Activated CD4-positive, alpha-beta memory T cell treated with anti-CD3 and anti-CD28 coated beads for 36 hours (primary cell): ENCODE measurements at regions of chr7 and their contacts with region 1.

Region 1: DNA sequence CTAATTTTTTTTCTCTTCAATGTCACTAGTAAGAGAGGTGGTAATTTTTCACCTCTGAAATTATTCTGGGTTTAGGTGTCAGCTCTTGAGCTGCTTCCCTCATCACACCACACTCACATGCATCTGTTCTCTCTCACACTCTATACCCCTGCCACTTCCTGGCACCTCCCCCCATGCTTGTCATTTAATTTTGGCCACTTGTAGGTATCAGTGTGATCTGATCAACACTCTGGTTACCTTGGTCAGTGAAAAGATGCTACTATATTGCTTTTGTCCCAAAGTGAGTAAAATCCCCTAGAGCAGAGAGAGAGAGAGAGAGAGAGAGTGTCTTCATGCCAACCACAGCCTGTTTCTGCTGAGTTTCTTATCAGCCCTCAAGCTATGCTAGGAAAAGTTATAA is 42.5 kb downstream of the STK17A start:
- DNase-seq: peak; percentile 67
- H3K4me3 Mint-ChIP-seq: no peak overlapping the region
- H3K27ac Mint-ChIP-seq: peak overlapping the region; percentile 54
- H3K4me1 Mint-ChIP-seq: peaks cover 84% of the 10 kb centered on the region
- H3K27me3 Mint-ChIP-seq: no peaks in the 10 kb centered on the region

Region 2: DNA sequence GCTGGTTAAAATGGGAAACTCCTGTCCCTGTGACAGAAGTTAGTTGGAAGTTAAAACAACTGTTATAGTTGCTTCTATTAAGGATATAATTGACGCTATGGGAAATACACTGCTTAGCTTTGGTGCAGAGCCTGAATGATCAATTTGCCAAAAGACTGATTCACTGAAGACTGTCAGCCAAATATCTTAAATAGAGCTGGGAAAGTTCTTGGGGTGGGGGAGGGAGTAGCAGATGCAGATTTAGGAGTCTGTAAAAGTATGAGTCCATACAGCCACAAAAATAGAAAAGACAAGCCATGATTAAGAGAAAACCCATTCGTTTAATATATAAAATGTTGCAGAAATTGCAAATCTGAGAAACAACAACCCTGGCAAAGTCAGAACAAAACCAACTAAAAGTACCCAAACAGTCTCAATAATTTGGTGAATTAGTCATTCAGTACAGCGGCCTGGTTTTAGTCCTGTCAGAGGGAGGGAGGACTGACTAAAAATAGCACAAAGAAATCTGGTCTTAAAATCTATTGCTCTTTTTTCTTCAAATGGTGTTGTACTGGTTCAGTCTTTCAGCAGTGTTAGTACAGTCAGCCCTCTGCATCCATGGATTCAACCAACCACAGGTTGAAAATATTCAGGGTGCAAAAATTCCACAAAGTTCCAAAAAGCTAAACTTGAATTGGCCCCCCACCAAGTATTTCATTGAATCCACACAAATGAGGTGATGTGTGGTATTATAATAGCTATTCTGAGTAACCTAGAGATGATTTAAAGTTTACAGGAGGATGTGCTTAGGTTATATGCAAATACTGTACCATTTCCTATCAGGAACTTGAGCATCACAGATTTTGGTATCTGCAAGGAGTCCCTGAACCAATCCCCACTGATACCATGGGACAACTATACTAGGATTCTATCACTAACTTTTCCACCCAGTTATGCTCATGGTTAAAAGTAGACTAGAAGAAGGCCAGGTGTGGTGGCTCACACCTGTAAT is 12.6 kb before region 1 on chr7:
- CTCF ChIA-PET with region 1: no interaction called
- POLR2A ChIA-PET with region 1: interaction called, 9 read pairs
- intact Hi-C with region 1: loop called (anchors 1 kb)
- DNase-seq: peak; percentile 33
- H3K4me3 Mint-ChIP-seq: peak overlapping the region; percentile 43
- H3K27ac Mint-ChIP-seq: peak overlapping the region; percentile 83
- H3K4me1 Mint-ChIP-seq: peaks cover 58% of the 10 kb centered on the region
- H3K27me3 Mint-ChIP-seq: no peaks in the 10 kb centered on the region

Region 3: DNA sequence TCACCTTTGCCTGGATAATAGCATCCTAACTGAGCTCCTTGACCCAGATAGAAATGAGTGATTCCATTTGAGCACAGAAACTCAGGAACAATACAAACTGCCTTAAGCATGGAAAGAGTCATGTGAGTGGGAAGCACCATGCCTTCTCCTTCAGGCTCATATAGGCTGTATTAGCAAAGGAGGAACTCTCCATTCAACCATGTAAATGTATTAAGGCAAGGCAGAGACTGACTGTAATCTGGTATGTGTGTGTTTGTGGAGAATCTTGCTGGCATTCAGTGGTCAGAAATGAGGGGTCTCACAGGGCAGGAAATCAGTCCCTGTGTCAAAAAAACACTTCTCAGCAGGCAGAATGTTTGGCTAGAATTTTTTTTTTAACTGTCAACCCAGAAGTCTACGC is 63.7 kb after region 1 on chr7:
- CTCF ChIA-PET with region 1: no interaction called
- POLR2A ChIA-PET with region 1: no interaction called
- intact Hi-C with region 1: no loop called
- DNase-seq: no peak
- H3K4me3 Mint-ChIP-seq: no peak overlapping the region
- H3K27ac Mint-ChIP-seq: no peak overlapping the region
- H3K4me1 Mint-ChIP-seq: peaks cover 40% of the 10 kb centered on the region
- H3K27me3 Mint-ChIP-seq: no peaks in the 10 kb centered on the region